MCF 10A (cell line): ENCODE measurements at regions of chr7 and their contacts with region 1.

Region 1: DNA sequence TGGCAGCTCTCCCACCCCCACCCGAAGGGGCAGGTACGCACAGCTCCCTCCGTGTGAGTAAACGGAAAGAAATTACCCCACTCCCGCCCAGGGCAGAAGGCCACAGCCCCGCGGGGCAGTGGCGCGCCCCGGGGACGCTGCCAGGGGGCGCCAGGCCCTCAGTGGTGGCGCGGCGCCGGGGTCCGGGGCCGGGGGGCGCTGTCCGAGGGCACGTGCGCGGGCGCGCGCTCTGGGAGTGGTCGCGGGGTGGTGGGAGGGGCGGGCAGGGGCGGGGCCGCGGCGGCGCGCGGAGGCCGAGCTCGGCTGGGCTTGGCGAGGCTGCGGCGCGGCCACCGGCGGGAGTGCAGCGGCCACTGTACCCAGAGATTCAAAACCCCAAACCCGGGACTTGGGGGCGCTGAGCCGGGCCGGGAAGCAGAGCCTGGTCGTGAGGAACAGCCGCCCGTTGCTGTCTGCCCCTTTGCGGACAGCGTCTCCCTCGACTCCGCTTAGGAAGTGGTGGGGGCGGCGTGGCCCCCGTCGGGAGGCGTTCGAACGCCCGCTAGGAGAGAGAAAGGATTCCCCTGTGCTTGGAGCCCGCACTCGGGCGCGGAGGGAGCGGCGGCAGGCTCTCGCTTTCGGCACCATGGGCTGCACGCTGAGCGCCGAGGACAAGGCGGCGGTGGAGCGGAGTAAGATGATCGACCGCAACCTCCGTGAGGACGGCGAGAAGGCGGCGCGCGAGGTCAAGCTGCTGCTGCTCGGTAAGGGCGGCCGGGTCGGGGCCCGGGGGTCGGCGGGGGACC is at the start of gene GNAI1:
- DNase-seq: peak; percentile 89
- H3K4me3 Mint-ChIP-seq: peak within 1 kb of the TSS; percentile 98
- H3K27ac Mint-ChIP-seq: peak within 1 kb of the TSS; percentile 95
- H3K4me1 Mint-ChIP-seq: peaks cover 36% of the 10 kb centered on the region
- H3K27me3 Mint-ChIP-seq: no peaks in the 10 kb centered on the region
- CTCF ChIP-seq: peak; percentile 34
- total RNA-seq, gene GNAI1: 27.6 and 30.4 TPM in 2 replicates

Region 2: DNA sequence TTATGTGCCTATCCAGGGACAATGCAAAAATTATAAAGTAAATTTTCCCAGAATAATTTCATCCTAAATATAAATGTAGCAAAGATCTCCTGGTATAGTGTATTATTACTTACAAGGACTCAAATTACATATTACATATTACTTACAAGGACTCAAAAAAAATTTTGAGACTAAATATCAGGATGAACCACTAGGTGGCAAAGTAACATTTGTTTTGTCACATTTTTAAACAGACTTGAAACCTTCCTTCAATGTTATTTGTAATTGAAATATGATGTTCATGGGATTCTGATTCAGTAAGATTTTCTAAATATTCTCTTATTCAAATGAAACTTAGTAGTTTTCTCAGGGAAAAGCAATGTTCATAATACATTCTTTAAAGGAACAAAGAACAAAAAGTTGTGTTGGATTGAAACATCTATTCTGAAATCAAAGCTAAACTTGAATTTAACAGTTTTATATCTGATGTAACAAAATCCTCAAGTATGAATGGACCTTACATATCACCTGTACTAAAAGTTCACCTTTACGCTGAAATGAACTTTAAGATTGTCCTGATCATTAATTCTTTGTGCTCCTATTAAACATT is 74.4 kb before region 1 on chr7:
- CTCF ChIA-PET with region 1: interaction called, 13 read pairs
- POLR2A ChIA-PET with region 1: interaction called, 4 read pairs
- intact Hi-C with region 1: loop called (anchors 1 kb)
- DNase-seq: peak; percentile 61
- H3K4me3 Mint-ChIP-seq: no peak overlapping the region
- H3K27ac Mint-ChIP-seq: no peak overlapping the region
- H3K4me1 Mint-ChIP-seq: no peaks in the 10 kb centered on the region
- H3K27me3 Mint-ChIP-seq: no peaks in the 10 kb centered on the region
- CTCF ChIP-seq: peak; percentile 46

Region 3: GRCh38 chr7:80145780-80146422 is 11.2 kb after region 1 on chr7:
- CTCF ChIA-PET with region 1: interaction called, 8 read pairs
- POLR2A ChIA-PET with region 1: interaction called, 229 read pairs
- intact Hi-C with region 1: no loop called
- DNase-seq: peak; percentile 43
- H3K4me3 Mint-ChIP-seq: peak overlapping the region; percentile 52
- H3K27ac Mint-ChIP-seq: peak overlapping the region; percentile 95
- H3K4me1 Mint-ChIP-seq: peaks cover 62% of the 10 kb centered on the region
- H3K27me3 Mint-ChIP-seq: no peaks in the 10 kb centered on the region
- CTCF ChIP-seq: no peak

Region 4: GRCh38 chr7:80183900-80184685 is 49.4 kb after region 1 on chr7:
- CTCF ChIA-PET with region 1: no interaction called
- POLR2A ChIA-PET with region 1: interaction called, 14 read pairs
- intact Hi-C with region 1: no loop called
- DNase-seq: peak; percentile 31
- H3K4me3 Mint-ChIP-seq: no peak overlapping the region
- H3K27ac Mint-ChIP-seq: no peak overlapping the region
- H3K4me1 Mint-ChIP-seq: peaks cover 19% of the 10 kb centered on the region
- H3K27me3 Mint-ChIP-seq: no peaks in the 10 kb centered on the region
- CTCF ChIP-seq: no peak

Region 5: GRCh38 chr7:80288175-80289122 is 153.7 kb after region 1 on chr7:
- CTCF ChIA-PET with region 1: interaction called, 4 read pairs
- POLR2A ChIA-PET with region 1: no interaction called
- intact Hi-C with region 1: loop called (anchors 5 kb)
- DNase-seq: peak; percentile 43
- H3K4me3 Mint-ChIP-seq: no peak overlapping the region
- H3K27ac Mint-ChIP-seq: no peak overlapping the region
- H3K4me1 Mint-ChIP-seq: no peaks in the 10 kb centered on the region
- H3K27me3 Mint-ChIP-seq: no peaks in the 10 kb centered on the region
- CTCF ChIP-seq: no peak

Region 6: GRCh38 chr7:80392229-80393169 is 257.8 kb after region 1 on chr7:
- CTCF ChIA-PET with region 1: interaction called, 26 read pairs
- POLR2A ChIA-PET with region 1: interaction called, 10 read pairs
- intact Hi-C with region 1: loop called (anchors 1 kb)
- DNase-seq: peak; percentile 38
- H3K4me3 Mint-ChIP-seq: no peak overlapping the region
- H3K27ac Mint-ChIP-seq: no peak overlapping the region
- H3K4me1 Mint-ChIP-seq: peaks cover 6% of the 10 kb centered on the region
- H3K27me3 Mint-ChIP-seq: no peaks in the 10 kb centered on the region
- CTCF ChIP-seq: peak; percentile 38